Activated CD8-positive, alpha-beta T cell treated with anti-CD3 and anti-CD28 coated beads for 36 hours (primary cell): ENCODE measurements at regions of chr2 and their contacts with region 1.

Region 1: DNA sequence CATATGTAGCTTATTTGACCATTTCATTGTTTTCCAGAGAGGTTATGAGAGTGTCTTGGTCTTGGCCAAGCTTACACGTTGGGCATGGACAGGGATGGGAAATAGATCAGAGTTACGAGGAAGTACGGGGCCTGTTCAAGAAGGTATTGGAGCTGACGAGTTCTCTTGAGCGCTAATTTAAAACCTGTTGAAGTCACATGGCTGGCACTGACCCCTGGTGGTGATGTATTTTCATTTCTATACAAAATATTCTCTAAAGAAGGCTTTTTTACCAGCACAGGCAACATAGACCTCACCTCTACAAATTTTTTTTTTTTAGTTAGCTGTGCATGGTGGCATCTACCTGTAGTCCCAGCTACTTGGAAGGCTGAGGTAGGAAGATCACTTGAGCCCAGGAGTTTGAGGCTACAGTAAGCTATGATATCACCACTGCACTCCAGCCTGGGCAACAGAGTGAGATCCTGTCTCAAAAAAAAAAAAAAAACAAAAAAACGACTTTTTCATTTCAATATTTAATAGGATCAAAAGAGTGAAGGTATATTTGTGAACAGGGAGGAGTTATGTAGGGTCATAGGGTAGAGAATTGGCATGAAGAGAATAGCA is 19.6 kb downstream of the UGP2 start:
- DNase-seq: peak; percentile 74
- ATAC-seq: peak; percentile 57
- H3K4me3 Mint-ChIP-seq: no peak overlapping the region
- H3K27ac Mint-ChIP-seq: no peak overlapping the region
- H3K4me1 Mint-ChIP-seq: peaks cover 39% of the 10 kb centered on the region
- H3K27me3 Mint-ChIP-seq: no peaks in the 10 kb centered on the region
- CTCF ChIP-seq: peak; percentile 69

Region 2: DNA sequence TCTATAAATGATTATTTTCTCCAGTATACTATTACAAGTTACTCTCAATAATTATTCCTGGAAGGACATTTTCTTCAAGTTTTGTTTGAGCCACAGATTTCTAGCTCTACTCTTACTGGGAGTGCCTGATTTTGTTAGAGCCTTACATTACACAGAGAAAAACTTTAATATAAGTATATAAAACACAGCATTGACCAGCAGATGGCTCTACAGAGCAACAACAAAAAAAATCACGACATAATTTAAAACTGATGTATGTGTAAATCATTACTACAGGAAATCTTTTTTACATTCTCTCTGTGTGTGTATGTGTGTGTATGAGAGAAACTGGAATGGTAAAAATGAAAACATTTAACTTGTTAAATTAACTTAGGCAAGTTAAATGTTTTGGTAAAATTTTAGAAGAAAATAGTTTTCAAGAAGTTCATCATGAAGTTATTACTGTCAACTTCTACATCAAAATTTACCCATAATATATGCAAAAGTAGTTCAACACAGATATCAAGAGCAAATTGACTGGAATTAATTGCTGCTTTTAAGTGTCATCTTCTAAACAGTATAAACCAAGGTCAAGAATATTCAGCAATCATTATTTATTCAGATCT is 169.2 kb before region 1 on chr2:
- CTCF ChIA-PET with region 1: interaction called, 14 read pairs
- POLR2A ChIA-PET with region 1: no interaction called
- intact Hi-C with region 1: loop called (anchors 2 kb)
- DNase-seq: peak; percentile 30
- ATAC-seq: peak; percentile 51
- H3K4me3 Mint-ChIP-seq: no peak overlapping the region
- H3K27ac Mint-ChIP-seq: no peak overlapping the region
- H3K4me1 Mint-ChIP-seq: no peaks in the 10 kb centered on the region
- H3K27me3 Mint-ChIP-seq: no peaks in the 10 kb centered on the region
- CTCF ChIP-seq: peak; percentile 78

Region 3: DNA sequence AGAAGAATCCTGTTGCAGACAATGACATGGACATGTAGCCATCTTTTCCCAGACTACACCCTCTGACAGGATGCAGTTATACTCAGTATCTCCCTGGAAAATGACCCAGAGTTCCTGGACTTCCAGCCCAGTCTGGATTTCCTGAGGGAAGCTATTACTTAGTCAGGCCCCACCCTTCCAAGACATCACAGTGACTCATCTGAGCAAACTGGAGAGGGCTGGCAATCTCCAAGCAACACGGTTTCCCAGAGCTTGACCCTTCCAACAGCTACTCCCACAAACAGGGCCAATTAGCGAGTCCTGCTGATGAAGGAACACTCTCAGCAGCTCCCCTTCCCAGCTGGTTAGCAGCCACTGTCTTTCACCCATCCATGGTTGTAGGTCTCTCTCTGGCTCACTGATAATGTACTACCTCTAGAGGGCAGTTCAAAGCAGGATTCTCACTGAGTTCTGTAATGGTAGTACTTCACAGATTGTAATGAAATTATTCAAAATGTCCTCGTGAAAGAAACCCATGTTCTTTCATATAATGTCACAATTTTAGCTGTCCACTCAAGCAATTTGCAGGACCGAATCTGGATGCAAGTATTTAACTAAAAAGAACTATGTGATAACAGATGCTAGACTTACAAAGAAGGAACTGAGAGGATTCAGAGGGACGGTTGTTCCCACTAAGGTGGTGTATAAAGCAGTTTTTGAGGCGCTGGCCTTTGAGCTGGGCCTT is 162.3 kb before region 1 on chr2:
- CTCF ChIA-PET with region 1: interaction called, 34 read pairs
- POLR2A ChIA-PET with region 1: no interaction called
- intact Hi-C with region 1: no loop called
- DNase-seq: no peak
- ATAC-seq: peak; percentile 86
- H3K4me3 Mint-ChIP-seq: no peak overlapping the region
- H3K27ac Mint-ChIP-seq: no peak overlapping the region
- H3K4me1 Mint-ChIP-seq: no peaks in the 10 kb centered on the region
- H3K27me3 Mint-ChIP-seq: no peaks in the 10 kb centered on the region
- CTCF ChIP-seq: peak; percentile 38

Region 4: GRCh38 chr2:63723709-63724108 is 137.6 kb before region 1 on chr2:
- CTCF ChIA-PET with region 1: no interaction called
- POLR2A ChIA-PET with region 1: no interaction called
- intact Hi-C with region 1: no loop called
- DNase-seq: no peak
- ATAC-seq: no peak
- H3K4me3 Mint-ChIP-seq: no peak overlapping the region
- H3K27ac Mint-ChIP-seq: no peak overlapping the region
- H3K4me1 Mint-ChIP-seq: no peaks in the 10 kb centered on the region
- H3K27me3 Mint-ChIP-seq: peaks cover 1% of the 10 kb centered on the region
- CTCF ChIP-seq: no peak

Region 5: GRCh38 chr2:63841254-63842022 is 19.9 kb before region 1 on chr2 and contains the start of gene UGP2:
- CTCF ChIA-PET with region 1: interaction called, 51 read pairs
- POLR2A ChIA-PET with region 1: interaction called, 58 read pairs
- intact Hi-C with region 1: no loop called
- DNase-seq: peak; percentile 94
- ATAC-seq: peak; percentile 77
- H3K4me3 Mint-ChIP-seq: peak within 1 kb of the TSS; percentile 86
- H3K27ac Mint-ChIP-seq: peak within 1 kb of the TSS; percentile 100
- H3K4me1 Mint-ChIP-seq: peaks cover 45% of the 10 kb centered on the region
- H3K27me3 Mint-ChIP-seq: no peaks in the 10 kb centered on the region
- CTCF ChIP-seq: peak; percentile 9
- total RNA-seq, gene UGP2: 81.4 to 83.7 TPM

Region 6: DNA sequence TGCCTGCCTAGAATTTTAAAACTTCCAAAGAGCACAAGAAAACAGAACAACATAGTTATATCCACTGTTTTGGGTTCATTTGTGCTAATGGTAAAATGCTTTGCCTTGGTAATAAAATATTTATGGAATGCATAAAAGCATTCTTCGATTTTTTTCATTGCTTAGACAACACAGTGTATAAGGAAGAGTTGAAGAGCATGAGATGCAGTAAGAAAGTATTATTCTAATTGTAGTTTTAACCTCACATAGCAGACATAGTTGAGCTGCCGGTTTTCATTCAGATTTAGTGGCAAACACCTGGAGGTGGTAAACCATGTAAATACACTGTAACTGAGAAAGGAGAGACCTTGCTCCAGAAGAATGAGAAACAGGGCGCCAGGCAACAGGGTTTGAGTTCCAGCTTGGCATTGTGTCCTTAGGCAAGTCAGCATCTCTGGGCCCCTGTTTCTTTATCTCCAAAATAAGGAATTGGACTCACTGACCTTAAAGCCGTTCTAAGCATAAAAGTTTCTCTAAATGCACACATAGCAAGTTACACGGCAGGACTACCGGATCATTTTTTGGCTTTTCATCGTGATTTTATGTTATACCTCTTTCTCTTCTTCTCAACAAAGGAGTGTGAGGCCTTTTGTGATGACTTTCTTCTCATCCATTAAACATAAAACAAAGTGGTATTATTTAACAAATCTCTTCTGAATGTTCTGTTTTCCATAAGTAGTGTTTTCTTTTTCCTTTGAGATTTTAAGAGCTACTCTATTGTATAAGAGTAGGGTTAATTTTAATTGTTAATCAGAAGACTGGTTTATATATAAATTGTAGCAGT is 11.7 kb before region 1 on chr2:
- CTCF ChIA-PET with region 1: interaction called, 51 read pairs
- POLR2A ChIA-PET with region 1: interaction called, 58 read pairs
- intact Hi-C with region 1: no loop called
- DNase-seq: no peak
- ATAC-seq: no peak
- H3K4me3 Mint-ChIP-seq: no peak overlapping the region
- H3K27ac Mint-ChIP-seq: peak overlapping the region; percentile 38
- H3K4me1 Mint-ChIP-seq: peaks cover 71% of the 10 kb centered on the region
- H3K27me3 Mint-ChIP-seq: no peaks in the 10 kb centered on the region
- CTCF ChIP-seq: no peak

Region 7: GRCh38 chr2:63875131-63875527 is 13.8 kb after region 1 on chr2:
- CTCF ChIA-PET with region 1: interaction called, 19 read pairs
- POLR2A ChIA-PET with region 1: interaction called, 4 read pairs
- intact Hi-C with region 1: no loop called
- DNase-seq: no peak
- ATAC-seq: no peak
- H3K4me3 Mint-ChIP-seq: no peak overlapping the region
- H3K27ac Mint-ChIP-seq: no peak overlapping the region
- H3K4me1 Mint-ChIP-seq: peaks cover 24% of the 10 kb centered on the region
- H3K27me3 Mint-ChIP-seq: no peaks in the 10 kb centered on the region
- CTCF ChIP-seq: no peak